Tibial artery (tissue), 4 donors: ENCODE measurements at regions of chr1 and their contacts with region 1.

Region 1: GRCh38 chr1:206489980-206490770 is 17.2 kb upstream of the RASSF5 start:
- DNase-seq: peak; percentile 78 to 81
- H3K4me3 ChIP-seq: no peak overlapping the region
- H3K27ac ChIP-seq: no peak overlapping the region
- H3K4me1 ChIP-seq: peaks cover 0 to 13% (median 10%) of the 10 kb centered on the region in 4 donors
- H3K27me3 ChIP-seq: no peaks in the 10 kb centered on the region
- CTCF ChIP-seq: peak; percentile 97 to 98

Region 2: DNA sequence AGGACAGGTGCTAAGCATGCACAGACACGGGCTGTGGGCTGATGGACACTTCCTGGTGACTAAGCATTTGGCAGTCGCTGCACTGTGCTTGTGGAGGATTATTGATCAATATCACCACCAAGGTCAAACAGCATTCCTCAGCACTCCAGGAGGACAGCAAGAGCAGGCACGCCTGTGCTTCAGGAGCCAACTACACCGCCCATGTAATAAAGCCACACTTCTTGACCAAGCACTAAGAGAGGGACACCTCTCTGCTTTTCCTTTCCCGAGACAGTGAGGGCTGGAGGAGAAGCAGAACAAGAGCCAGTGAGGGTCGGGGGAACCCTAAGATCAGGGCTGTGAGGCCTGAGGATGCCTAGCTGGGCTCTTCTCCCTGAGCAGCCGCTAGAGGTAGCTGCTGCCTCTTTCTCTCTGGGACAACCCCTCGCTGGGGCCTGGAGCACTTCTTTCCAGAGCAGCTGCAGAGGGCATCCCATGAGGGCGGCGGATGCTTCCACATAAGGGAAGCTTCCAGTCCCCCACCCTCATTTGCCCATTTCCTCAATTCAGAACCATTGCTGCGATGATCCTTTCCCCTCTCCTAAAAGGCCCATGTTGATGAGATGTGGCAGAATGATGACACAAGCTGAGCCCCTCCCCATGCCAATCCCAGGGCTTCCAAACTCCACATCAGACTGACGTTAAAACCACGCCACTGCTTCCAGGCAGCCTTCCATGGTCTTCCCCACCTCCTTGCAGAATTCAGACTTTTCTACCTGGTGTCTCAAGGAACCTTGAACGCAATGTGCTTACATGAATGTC is 506.1 kb before region 1 on chr1:
- intact Hi-C with region 1: no loop called
- DNase-seq: peak; percentile 63 to 70
- H3K4me3 ChIP-seq: no peak overlapping the region
- H3K27ac ChIP-seq: no peak overlapping the region
- H3K4me1 ChIP-seq: peaks cover 0 to 13% (median 0%) of the 10 kb centered on the region in 4 donors
- H3K27me3 ChIP-seq: no peaks in the 10 kb centered on the region
- CTCF ChIP-seq: peak; percentile 49 to 51

Region 3: DNA sequence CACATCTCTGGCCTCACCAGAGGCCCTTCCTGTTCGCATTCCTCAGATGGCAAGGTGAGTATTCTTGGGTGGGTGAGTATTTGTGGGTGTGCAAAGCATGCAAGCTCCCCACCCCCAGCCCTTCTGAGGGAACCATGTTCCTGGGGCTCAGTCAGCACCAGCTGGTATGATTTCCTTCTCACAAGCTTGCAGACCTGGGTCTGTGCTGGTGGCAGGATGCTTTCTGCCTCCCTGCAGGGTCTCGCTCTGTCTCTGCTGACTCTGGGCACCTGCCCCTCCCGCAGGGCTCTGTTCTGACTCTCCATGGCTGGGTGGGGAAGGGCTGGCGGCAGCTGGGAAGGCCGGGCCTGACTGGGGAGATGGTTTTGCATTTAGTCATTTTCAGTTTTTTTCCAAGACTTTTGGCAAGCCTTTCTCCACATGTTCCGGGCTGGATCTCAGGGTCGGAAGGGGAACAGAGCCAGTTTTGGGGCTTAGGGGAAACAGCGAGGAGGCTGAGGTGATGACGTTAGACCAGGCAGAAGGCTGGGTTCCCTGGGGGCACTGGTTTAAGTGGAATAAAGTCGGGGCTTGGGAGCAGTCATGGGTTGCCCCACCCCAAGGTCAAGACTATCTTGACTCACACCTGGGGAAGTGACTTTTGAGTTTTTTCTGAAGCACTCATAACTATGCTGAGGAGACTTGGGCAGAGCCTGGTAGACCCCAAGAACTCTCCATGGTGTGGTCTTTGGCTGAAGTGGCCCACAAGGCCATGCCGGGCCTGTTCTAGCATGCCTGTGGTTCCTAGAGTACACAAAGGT is 23.3 kb after region 1 on chr1:
- intact Hi-C with region 1: loop called (anchors 2 kb)
- DNase-seq: peak; percentile 77 to 91
- H3K4me3 ChIP-seq: no peak overlapping the region
- H3K27ac ChIP-seq: peak overlapping the region; percentile 43 to 54
- H3K4me1 ChIP-seq: peaks cover 0 to 43% (median 33%) of the 10 kb centered on the region in 4 donors
- H3K27me3 ChIP-seq: no peaks in the 10 kb centered on the region
- CTCF ChIP-seq: no peak

Region 4: GRCh38 chr1:206544562-206545257 is 54.5 kb after region 1 on chr1:
- intact Hi-C with region 1: loop called (anchors 5 kb)
- DNase-seq: peak; percentile 58 to 77
- H3K4me3 ChIP-seq: no peak overlapping the region
- H3K27ac ChIP-seq: no peak overlapping the region
- H3K4me1 ChIP-seq: peaks cover 0 to 24% (median 21%) of the 10 kb centered on the region in 4 donors
- H3K27me3 ChIP-seq: no peaks in the 10 kb centered on the region
- CTCF ChIP-seq: peak; percentile 68 to 87

Region 5: DNA sequence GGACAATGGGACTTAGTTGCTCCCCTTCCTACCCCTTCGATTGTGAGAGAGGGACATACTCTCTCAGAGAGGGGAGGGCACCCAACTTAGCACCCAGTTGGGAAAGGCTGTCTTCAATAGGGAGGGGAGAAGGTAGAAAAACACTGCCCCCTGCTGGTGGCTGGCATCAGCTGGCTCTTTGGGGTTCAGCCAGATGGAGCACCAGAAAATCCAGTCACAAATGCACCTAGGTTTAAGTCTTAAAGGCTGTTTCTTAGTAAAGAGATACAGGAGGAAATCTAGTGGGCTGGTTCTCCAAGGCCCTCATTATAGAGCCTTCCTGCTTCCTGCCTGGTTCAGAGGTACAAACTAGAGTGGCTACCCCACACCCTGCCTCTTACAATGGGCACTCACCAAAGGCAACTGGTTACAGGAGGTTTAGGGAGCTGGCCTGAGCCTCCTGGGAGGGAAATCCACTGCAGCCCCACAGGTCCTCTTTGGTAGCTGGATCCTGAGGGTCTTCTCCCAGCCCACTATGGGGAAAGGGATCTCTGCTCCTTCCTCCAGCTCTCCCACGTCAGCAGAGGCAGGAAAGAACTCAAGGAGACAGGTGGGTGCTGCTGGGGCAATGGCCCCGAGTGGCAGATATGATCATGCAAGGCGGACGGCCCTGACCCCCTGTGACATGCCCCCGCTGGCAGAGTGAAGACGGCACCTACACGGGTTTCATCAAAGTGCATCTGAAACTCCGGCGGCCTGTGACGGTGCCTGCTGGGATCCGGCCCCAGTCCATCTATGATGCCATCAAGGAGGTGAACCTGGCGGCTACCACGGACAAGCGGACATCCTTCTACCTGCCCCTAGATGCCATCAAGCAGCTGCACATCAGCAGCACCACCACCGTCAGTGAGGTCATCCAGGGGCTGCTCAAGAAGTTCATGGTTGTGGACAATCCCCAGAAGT is 93.8 kb after region 1 on chr1:
- intact Hi-C with region 1: loop called (anchors 2 kb)
- DNase-seq: peak; percentile 74 to 83
- H3K4me3 ChIP-seq: no peak overlapping the region
- H3K27ac ChIP-seq: no peak overlapping the region
- H3K4me1 ChIP-seq: peaks cover 0 to 12% (median 5%) of the 10 kb centered on the region in 4 donors
- H3K27me3 ChIP-seq: no peaks in the 10 kb centered on the region
- CTCF ChIP-seq: peak; percentile 90 to 91

Region 6: DNA sequence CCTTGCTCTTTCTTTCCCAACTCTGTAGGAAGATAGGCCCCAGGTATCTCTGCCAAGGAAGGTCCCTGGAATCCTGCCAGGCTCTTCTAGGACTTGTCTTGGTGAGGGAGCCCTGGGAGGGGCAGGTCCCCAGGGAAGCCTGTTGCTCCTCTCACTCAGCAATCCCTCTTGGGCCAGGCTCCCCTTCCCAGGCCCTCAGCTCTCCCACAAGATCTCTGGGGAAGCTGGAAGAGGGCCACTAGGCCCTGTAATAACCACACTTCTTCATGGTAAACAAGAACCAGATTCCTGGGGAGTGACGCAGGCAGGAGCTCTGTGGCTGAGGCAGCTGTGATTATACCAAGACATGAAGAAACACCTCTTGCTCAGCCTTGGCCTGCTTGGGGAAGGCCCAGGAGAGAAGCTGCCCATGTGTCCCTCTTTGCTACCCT is 184.6 kb after region 1 on chr1:
- intact Hi-C with region 1: no loop called
- DNase-seq: peak; percentile 81 to 87
- H3K4me3 ChIP-seq: no peak overlapping the region
- H3K27ac ChIP-seq: peak overlapping the region; percentile 69 to 80
- H3K4me1 ChIP-seq: peaks cover 0 to 39% (median 33%) of the 10 kb centered on the region in 4 donors
- H3K27me3 ChIP-seq: no peaks in the 10 kb centered on the region
- CTCF ChIP-seq: no peak

Region 7: DNA sequence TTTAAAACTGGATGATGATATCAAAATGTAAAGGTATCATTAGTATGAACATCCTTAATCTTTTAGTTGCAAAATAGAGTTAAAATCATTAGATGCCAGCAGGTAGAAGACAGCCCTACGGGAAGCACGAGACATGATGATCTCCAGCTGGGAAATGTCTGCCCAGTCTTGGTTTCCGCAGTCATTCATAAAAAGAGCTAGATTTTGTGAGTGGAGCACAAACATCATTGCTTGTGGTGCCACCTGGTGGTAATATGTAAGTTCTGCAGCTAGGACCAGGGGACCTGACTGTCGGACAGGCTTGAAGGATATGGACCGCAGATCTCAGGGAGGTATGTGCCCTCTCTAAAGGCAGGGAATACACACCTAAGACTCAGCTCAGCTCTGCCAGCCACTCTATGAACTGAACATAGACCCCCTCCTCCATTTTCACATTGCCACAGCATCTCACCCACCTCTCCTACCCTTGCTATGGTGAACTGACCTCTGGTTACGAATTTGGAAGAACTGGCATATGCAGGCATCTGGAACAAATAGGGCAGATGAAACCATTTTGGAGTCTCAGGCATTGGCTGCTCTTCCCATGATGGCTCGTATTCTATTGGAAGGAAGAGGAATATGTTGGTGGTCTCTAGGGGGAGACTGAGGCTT is 422.4 kb after region 1 on chr1:
- intact Hi-C with region 1: loop called (anchors 5 kb)
- DNase-seq: peak; percentile 74 to 75
- H3K4me3 ChIP-seq: no peak overlapping the region
- H3K27ac ChIP-seq: no peak overlapping the region
- H3K4me1 ChIP-seq: peaks cover 0 to 14% (median 12%) of the 10 kb centered on the region in 4 donors
- H3K27me3 ChIP-seq: peaks cover 0 to 45% of the 10 kb centered on the region in 2 donors
- CTCF ChIP-seq: peak; percentile 82 to 84